ENCODE measurements at regions of chr14 and their contacts with region 1.

Region 1: GRCh38 chr14:21455911-21456667 is at the start of gene CHD8:
- DNase-seq: peak; percentile 99 to 100 (median 100)

Region 2: DNA sequence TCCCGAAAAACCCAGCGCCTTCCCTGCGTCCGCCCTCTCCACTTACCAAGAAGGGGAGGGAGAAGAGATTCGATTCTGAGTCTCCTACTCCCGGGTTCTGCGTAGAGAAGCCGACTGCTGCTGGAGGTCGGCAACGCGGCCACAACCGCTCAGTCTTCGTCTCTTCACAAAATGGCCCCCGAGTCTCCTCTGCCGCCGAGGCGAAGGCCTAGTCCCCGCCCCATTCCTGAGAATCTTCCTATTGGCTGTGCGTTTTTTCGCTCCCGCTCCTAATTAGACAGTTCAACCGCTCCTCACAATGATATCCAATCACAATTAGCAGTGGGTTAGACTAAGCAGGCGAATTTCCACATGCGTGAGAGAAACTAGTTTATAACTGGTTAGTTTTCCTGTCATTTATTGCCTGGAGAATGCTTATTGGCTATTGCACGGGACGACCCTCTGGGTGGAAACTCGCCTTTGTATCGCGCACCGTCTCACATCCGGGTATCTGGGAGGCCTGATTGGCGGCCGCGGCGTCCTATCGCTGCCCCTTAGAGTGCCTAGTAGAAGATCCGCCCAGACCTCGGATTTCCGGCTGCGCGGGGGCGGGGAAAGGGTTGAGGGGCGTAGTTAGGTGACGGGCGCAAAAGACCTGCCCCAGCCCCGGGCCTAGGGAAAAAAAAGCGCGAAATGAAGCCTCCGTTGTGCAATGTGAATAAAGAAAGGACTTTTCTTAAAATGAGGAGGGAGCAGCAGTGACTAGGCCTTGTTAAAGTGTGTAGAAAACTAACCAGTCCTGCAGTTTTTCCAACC is 186.6 kb before region 1 on chr14 and contains the start of gene HNRNPC:
- intact Hi-C with region 1: loop called (anchors 10 kb)
- DNase-seq: peak; percentile 99 to 100 (median 100)

Region 3: DNA sequence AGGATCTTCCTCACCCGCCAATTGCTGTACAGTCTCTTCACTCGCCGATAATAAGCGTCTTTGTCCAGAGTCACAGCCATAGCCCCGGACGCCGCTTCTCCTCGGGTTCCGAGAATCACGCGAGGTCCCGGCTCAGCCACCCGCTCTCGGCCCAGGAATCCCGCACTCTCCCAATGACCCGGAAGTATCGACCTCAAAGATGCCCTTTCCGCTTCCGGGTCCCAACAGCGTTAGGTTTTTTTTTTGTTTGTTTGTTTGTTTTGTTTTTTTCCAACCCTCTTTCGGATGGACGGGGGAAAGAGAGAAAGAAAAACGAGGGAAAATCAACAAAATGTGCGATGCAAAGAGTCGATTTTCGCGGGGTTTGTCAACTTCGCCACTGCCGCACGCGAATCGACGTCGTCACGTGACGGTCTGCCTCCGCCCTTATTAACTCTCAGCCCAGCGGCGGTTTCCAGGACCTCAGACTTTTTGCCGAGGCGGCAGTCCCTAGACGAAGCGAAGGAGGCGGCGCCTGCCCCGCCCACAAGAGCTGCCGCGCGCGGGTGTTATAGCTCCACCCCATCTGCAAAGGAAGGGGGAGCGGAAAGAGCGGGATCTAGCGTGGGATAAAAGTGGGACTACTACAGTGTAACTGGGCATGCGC is 72.1 kb before region 1 on chr14 and contains the start of gene SUPT16H:
- intact Hi-C with region 1: no loop called
- DNase-seq: peak; percentile 85 to 99 (median 88)

Region 4: DNA sequence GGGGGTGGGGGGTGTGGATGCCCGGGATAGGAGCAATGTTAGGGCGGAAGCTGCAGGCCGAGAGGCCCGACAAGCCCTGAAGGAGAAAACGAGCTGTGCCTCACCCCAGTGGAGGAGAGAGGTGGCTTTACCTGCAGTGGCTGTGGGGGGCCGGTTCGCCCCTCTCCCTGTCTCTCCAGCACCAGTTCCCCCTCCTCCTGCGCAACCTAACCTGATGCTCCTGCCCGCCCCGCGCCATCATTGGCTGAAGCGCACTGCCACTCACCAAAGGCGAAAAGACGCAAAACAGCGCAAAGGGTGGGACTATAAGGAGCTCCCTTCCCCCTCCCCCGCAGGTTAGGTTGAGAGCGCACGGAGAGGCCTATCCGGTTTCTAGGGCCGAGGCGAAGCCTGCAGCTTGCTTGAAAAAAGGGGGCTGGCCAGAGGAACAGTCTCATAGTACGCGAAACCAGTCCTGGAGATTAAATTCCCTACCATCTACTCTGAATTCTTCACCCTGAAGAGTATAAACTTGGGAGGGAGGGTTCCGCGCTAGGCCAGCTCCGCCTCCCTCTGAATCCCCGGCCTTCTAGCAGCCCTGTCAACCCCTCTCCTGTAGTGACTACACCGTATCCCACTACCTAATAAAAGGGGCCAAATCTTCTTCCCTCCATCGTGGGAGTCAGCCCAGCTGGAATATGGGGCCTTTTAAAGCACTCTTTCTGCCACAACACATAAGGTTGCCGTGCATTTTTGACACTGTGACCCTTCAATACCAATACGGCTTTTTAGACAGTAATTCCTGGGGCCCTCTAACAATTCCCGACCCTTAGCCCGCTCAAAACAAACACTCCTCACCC is 18.8 kb before region 1 on chr14:
- intact Hi-C with region 1: loop called (anchors 1 kb)
- DNase-seq: peak; percentile 98 to 100 (median 99)

Region 5: DNA sequence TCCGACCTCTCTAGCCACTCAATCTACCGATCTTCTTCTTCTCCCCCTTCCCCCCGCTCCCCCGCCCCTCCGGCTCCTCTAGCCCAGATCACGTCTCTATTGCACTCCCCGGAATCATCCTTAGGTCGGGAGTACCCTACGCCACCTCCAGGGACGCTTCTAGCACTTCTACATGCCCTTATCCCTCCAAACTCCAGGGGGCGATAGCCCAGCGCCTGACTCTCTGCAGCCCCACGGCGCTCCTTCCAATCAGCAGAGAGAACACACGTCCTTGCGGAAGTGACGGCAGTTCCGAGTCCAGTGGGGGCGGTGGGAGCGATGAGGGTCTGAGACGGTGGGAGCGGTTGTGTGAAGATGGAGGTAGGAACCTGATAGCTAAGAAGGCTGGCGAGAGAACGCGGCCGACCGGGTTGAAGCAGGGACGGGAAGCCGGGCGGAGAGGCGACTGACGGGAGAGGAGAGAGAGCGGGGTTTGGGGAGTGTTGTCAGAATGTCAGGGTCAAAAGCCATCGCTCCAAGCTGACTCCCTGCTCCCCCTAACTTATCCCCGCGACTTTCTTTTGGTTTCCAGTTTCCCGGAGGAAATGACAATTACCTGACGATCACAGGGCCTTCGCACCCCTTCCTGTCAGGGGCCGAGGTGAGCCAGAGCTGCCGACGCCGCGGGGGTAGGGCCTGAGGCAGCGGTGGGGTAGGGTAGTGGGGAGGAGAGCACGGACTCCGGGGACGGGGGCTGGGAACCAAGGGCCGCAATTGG is 21.0 kb after region 1 on chr14 and contains the starts of genes RAB2B and TOX4:
- intact Hi-C with region 1: loop called (anchors 1 kb)
- DNase-seq: peak; percentile 95 to 100 (median 98)

Region 6: DNA sequence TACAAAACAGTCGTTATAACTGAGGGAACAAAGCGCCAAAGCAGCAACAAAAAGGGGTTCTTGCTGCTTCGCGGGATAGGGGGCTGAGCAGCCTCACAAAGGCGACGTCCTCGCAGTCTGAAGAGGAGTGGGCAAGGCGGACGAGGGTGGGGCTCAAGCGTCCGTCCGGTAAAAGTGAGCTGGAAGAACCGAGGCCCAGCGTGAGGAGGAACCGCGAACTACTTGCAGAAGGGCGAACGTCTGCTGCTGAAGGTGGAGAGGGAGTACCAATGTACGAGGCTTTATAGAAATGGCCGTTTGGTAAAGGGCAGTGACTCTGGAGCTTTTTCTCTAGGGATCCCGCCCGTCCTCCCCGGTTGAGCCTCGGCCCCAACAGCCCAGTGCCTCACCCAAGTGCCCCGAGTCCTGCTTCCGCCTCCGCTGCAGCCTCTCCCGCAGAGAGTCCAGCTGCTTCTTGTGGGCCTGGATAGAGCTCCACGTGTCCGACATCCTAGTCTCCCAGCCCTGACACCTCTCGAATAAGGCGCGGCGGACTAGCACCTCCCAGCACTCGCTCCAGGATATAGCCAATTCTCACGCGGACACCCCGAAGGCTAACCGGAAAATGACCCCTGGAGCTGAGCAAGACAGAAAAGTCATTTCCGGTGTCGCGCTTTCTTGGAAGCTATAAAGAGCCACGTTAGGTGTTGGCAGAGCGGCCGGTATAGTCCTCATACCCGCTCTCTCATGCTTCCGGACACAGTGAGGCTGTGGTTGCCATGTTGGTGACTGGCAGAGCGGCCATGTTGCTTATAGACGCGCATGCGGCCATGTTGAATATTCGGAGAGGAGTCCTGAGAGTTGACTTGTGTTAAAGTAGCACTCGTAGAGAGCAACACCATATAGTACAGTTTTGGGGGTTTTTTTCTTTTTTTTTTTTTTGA is 54.9 kb after region 1 on chr14 and contains the start of gene METTL3:
- intact Hi-C with region 1: loop called (anchors 1 kb)
- DNase-seq: peak; percentile 93 to 99 (median 96)

Region 7: DNA sequence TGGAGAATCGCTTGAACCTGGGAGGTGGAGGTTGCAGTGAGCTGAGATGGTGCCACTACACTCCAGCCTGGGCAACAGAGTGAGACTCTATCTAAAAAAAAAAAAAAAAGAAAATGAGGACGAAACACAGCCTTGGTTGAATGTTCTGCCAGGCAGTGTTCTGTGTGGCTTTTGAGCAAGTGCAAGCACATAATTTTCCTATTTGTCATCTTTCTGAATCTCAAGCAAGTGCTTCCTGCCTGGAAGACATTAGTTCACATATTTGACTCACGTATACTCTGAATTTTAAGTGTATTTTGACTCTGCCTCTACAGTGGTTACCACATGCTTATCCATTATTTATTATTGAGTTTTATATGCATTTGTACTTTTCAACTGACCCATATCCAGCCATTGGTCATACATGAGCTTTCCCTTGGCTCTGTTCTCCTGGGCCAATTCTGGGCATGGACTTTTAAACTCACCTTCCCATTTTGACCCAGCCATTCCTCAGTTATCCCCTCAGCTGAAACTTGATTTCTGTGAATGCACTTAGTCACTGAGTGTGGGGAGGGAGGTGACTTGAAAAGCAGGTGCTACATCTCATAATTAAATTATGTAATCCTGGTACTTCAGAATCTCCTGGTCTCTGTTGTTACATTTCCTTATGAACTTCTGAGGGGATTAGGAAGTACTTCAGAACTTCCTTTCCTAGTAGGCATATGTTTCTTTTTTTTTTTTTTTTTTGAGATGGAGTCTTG is 170.6 kb after region 1 on chr14:
- intact Hi-C with region 1: no loop called
- DNase-seq: no peak